Activated naive CD4-positive, alpha-beta T cell treated with anti-CD3 and anti-CD28 coated beads for 36 hours (primary cell): ENCODE measurements at regions of chr20 and their contacts with region 1.

Region 1: GRCh38 chr20:31572701-31573554 is 32.2 kb upstream of the ID1 start:
- DNase-seq: peak; percentile 92
- H3K4me3 Mint-ChIP-seq: peak overlapping the region; percentile 86
- H3K27ac Mint-ChIP-seq: peak overlapping the region; percentile 85
- H3K4me1 Mint-ChIP-seq: peaks cover 23% of the 10 kb centered on the region
- H3K27me3 Mint-ChIP-seq: no peaks in the 10 kb centered on the region

Region 2: GRCh38 chr20:31514159-31515071 is 58.5 kb before region 1 on chr20 and contains the start of gene HM13:
- CTCF ChIA-PET with region 1: no interaction called
- intact Hi-C with region 1: loop called (anchors 2 kb)
- DNase-seq: peak; percentile 89
- H3K4me3 Mint-ChIP-seq: no peak within 1 kb of the TSS
- H3K27ac Mint-ChIP-seq: peak within 1 kb of the TSS; percentile 1
- H3K4me1 Mint-ChIP-seq: peaks cover 9% of the 10 kb centered on the region
- H3K27me3 Mint-ChIP-seq: no peaks in the 10 kb centered on the region
- total RNA-seq, gene HM13: 67.3 to 69.4 TPM

Region 3: DNA sequence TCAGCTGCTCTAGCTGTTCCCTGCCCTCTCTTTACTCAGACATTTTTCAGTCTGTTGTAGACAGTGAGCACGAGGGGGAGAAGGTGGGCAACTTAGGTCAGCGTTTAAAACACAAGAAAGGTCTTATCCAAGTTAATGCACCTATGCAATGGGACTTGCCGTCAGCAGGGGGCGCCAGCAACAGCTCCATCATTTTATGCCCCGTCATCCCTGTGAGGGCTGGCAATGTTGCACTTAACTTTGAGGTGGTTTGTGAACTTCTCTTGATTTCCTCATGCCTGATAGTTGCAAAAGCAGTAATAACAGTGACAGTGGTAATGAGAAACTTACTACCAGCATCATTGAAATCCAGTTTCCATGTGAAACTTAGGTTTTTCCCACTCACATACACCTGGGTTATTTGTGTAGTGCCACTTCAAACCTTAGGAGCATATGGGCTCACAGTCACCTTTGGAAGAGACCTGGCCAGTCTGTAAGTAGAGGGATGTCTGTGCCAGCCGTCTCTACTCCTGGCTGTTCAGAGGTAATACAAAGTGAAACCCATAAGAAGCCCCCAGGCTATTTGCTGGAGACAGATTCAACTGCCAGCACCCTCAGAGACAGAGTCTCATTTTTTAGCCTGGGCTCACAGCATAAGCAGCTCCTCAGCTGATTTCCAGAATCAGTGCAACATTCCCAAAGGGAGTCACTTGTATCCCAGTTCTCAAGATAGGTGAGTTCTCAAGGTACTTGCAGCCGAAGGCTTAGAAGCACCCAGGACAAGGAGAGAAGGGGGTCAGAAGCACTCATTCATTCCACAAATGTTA is 12.6 kb before region 1 on chr20:
- CTCF ChIA-PET with region 1: interaction called, 135 read pairs
- intact Hi-C with region 1: loop called (anchors 1 kb)
- DNase-seq: peak; percentile 92
- H3K4me3 Mint-ChIP-seq: no peak overlapping the region
- H3K27ac Mint-ChIP-seq: peak overlapping the region; percentile 61
- H3K4me1 Mint-ChIP-seq: peaks cover 13% of the 10 kb centered on the region
- H3K27me3 Mint-ChIP-seq: no peaks in the 10 kb centered on the region

Region 4: GRCh38 chr20:31587545-31588389 is 14.8 kb after region 1 on chr20:
- CTCF ChIA-PET with region 1: interaction called, 8 read pairs
- intact Hi-C with region 1: loop called (anchors 2 kb)
- DNase-seq: no peak
- H3K4me3 Mint-ChIP-seq: peak overlapping the region; percentile 55
- H3K27ac Mint-ChIP-seq: no peak overlapping the region
- H3K4me1 Mint-ChIP-seq: peaks cover 8% of the 10 kb centered on the region
- H3K27me3 Mint-ChIP-seq: peaks cover 25% of the 10 kb centered on the region

Region 5: GRCh38 chr20:31605031-31605901 is 32.3 kb after region 1 on chr20 and contains the start of gene ID1:
- CTCF ChIA-PET with region 1: interaction called, 330 read pairs
- intact Hi-C with region 1: loop called (anchors 1 kb)
- DNase-seq: peak; percentile 89
- H3K4me3 Mint-ChIP-seq: peak within 1 kb of the TSS; percentile 85
- H3K27ac Mint-ChIP-seq: no peak within 1 kb of the TSS
- H3K4me1 Mint-ChIP-seq: peaks cover 26% of the 10 kb centered on the region
- H3K27me3 Mint-ChIP-seq: peaks cover 48% of the 10 kb centered on the region
- total RNA-seq, gene ID1: 1.8 to 2.4 TPM

Region 6: DNA sequence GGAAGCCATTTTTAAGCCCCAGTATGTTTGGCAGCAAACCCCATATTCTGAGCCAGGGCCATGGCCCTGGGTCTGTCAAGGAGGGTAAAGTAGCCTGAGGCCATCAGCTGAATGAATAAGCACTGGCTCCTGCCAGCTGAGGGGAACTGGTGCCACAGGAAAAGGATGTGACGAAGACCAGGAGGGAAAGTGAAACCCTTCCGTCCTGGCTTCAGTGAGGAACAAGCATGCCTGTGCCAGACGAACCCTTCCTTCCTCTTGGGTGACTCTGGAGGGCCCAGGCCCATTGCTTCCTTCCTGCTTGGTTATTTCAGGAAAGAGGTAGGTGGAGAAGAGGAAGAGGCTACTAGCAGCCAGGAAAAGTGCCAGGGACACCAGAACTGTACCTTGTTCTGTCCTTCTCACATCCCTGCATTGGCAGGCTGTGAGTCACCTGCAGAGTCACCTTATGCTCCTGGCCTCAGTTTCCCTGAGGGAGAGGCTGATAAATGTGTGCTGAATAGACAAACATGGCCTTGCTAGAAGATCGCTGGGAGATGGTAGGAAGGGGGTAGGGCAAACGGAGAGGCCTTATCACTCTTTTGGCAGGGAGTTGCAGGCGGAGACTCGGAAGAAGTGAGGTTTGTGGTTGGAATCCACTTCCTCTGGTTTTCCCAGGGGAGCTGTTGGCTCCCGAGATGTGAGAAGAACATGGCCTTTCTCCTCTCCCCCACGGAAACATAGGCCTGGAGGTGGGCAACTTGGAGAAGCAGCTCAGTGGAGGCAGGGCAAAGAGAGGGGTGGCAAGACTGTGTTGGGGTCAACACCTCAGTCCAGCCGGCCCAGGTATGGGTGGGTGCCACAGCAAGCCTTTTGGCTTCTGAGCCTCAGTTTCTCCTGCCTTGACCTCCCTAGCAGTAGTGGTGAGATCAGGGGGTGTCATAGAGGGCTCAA is 102.2 kb after region 1 on chr20:
- CTCF ChIA-PET with region 1: no interaction called
- intact Hi-C with region 1: loop called (anchors 5 kb)
- DNase-seq: peak; percentile 86
- H3K4me3 Mint-ChIP-seq: peak overlapping the region; percentile 84
- H3K27ac Mint-ChIP-seq: peak overlapping the region; percentile 97
- H3K4me1 Mint-ChIP-seq: peaks cover 79% of the 10 kb centered on the region
- H3K27me3 Mint-ChIP-seq: no peaks in the 10 kb centered on the region